ENCODE measurements at regions of chr12 and their contacts with region 1.

Region 1: GRCh38 chr12:110280779-110281548 is at the start of gene ATP2A2:
- DNase-seq: peak; percentile 80 to 98 (median 88)
- ATAC-seq: peak; percentile 87
- H3K4me3 ChIP-seq: peak within 1 kb of the TSS; percentile 82
- H3K4me3 Mint-ChIP-seq: peak within 1 kb of the TSS; percentile 97
- H3K27ac ChIP-seq: peak within 1 kb of the TSS; percentile 40 to 77
- H3K27ac Mint-ChIP-seq: peak within 1 kb of the TSS; percentile 91
- H3K4me1 ChIP-seq: peaks cover 23% of the 10 kb centered on the region
- H3K4me1 Mint-ChIP-seq: peaks cover 46% of the 10 kb centered on the region
- H3K27me3 ChIP-seq: no peaks in the 10 kb centered on the region
- H3K27me3 Mint-ChIP-seq: no peaks in the 10 kb centered on the region
- CTCF ChIP-seq: no peak
- total RNA-seq, gene ATP2A2: 113 to 117 TPM

Region 2: DNA sequence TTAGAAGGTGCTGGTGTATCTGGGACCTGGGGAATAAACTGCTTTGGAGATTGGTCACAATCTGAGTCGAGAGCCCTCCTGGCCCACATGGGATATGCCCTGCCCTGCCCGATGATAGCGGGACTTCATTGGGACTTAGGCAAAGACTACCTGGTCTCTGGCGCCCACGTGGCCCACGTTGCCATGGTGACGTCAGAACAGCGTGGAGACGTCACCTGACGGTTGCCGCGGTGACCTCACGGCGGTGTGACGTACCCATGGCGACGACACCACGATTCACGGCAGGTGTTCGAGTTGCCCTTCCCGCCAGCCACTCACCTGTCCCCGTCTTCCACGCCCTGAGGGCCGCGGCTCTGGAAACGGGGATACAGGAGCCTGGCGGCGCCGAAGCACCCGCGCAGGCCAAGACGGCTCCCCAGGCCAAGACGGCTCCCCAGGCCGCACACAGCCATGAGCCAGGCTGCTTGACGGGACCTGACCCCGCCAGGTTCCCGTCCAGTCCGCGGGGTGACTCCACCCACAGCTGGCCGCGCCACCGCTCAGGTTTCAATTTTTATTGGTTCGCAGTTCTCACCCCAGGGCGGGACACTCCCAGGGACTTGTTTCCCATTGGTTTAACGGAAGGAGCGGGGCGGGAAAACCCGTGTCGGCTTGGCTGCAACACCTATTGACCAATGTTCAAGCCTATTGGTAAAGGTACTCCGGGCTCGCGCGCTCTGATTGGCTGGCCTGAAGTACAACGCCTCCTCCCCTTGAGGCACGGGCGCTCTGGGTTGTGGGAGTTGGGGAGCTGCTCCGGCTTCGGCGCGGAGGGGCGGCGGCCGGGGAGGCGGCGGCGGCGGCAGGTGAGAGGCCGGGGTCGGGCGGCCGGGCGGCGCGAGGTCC is 707.7 kb before region 1 on chr12 and contains the starts of genes MMAB and MVK:
- CTCF ChIA-PET with region 1: no interaction called
- POLR2A ChIA-PET with region 1: no interaction called
- intact Hi-C with region 1: loop called in 1 of 2 experiments (anchors 10 kb)
- DNase-seq: peak; percentile 95 to 100 (median 98)
- ATAC-seq: peak; percentile 91
- H3K4me3 ChIP-seq: peak within 1 kb of the TSS; percentile 78
- H3K4me3 Mint-ChIP-seq: peak within 1 kb of the TSS; percentile 99
- H3K27ac ChIP-seq: peak within 1 kb of the TSS; percentile 83 to 96
- H3K27ac Mint-ChIP-seq: peak within 1 kb of the TSS; percentile 95
- H3K4me1 ChIP-seq: peaks cover 19% of the 10 kb centered on the region
- H3K4me1 Mint-ChIP-seq: peaks cover 29% of the 10 kb centered on the region
- H3K27me3 ChIP-seq: no peaks in the 10 kb centered on the region
- H3K27me3 Mint-ChIP-seq: no peaks in the 10 kb centered on the region
- CTCF ChIP-seq: no peak
- total RNA-seq, gene MMAB: 8.6 to 9.2 TPM
- total RNA-seq, gene MVK: 8.2 to 8.4 TPM

Region 3: GRCh38 chr12:110048242-110049027 is 232.5 kb before region 1 on chr12 and contains the start of gene C12orf76:
- CTCF ChIA-PET with region 1: no interaction called
- POLR2A ChIA-PET with region 1: no interaction called
- intact Hi-C with region 1: loop called in 1 of 2 experiments (anchors 5 kb)
- DNase-seq: peak; percentile 82 to 97 (median 90)
- ATAC-seq: peak; percentile 99
- H3K4me3 ChIP-seq: peak within 1 kb of the TSS; percentile 79
- H3K4me3 Mint-ChIP-seq: peak within 1 kb of the TSS; percentile 93
- H3K27ac ChIP-seq: peak within 1 kb of the TSS; percentile 76 to 87
- H3K27ac Mint-ChIP-seq: peak within 1 kb of the TSS; percentile 82
- H3K4me1 ChIP-seq: peaks cover 29% of the 10 kb centered on the region
- H3K4me1 Mint-ChIP-seq: peaks cover 29% of the 10 kb centered on the region
- H3K27me3 ChIP-seq: no peaks in the 10 kb centered on the region
- H3K27me3 Mint-ChIP-seq: no peaks in the 10 kb centered on the region
- CTCF ChIP-seq: no peak
- total RNA-seq, gene C12orf76: 9.8 to 12.6 TPM

Region 4: DNA sequence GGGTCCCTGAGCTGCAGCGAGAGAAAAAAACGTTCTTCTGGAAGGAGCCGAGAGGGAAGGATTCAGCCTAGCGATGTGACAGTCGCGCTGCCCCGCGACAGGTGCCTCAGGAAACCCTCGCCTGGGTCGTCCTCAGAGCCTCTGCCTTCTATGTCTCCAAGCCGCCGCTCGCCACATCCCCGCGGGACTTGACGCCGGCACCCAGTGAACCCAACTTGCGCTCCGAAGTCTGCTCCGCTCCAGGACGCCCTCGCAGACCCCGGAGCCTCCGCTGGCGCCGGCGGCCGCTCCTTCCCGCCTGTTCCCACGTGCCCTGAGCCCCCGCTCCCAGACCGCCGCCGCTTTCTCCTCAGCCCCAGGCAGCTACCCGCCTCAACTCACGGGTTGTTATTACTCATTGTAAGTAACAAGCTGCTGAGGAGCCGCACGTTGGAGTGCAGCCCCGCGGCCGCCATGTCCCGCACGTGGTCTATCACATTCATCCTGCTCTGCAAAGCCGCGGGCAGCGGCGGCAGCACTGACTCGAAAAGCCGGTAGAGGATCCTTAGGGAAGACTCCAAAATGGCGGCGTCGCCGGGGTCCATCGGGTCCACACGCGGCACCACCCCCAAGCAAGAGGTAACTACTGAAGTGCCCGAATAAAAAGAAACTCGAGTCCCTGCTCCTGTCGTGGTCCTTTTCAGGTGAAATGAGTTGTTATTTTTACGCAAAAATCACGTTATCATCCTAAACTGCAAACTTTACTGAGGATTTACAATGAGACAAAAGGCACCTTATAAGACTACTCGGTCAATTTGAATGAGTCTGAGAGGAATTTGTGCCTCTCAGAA is 122.4 kb after region 1 on chr12 and contains the start of gene ANAPC7:
- CTCF ChIA-PET with region 1: no interaction called
- POLR2A ChIA-PET with region 1: interaction called, 6 read pairs
- intact Hi-C with region 1: loop called in 1 of 2 experiments (anchors 5 kb)
- DNase-seq: peak; percentile 73 to 94 (median 84)
- ATAC-seq: peak; percentile 94
- H3K4me3 ChIP-seq: peak within 1 kb of the TSS; percentile 79
- H3K4me3 Mint-ChIP-seq: peak within 1 kb of the TSS; percentile 99
- H3K27ac ChIP-seq: peak within 1 kb of the TSS; percentile 86 to 91
- H3K27ac Mint-ChIP-seq: peak within 1 kb of the TSS; percentile 98
- H3K4me1 ChIP-seq: peaks cover 26% of the 10 kb centered on the region
- H3K4me1 Mint-ChIP-seq: peaks cover 41% of the 10 kb centered on the region
- H3K27me3 ChIP-seq: no peaks in the 10 kb centered on the region
- H3K27me3 Mint-ChIP-seq: no peaks in the 10 kb centered on the region
- CTCF ChIP-seq: no peak
- total RNA-seq, gene ANAPC7: 16.4 to 18.2 TPM

Region 5: GRCh38 chr12:110613771-110614684 is 333.1 kb after region 1 on chr12 and contains the start of gene TCTN1:
- CTCF ChIA-PET with region 1: no interaction called
- POLR2A ChIA-PET with region 1: no interaction called
- intact Hi-C with region 1: loop called in 1 of 2 experiments (anchors 10 kb)
- DNase-seq: peak; percentile 91 to 98 (median 96)
- ATAC-seq: peak; percentile 99
- H3K4me3 ChIP-seq: peak within 1 kb of the TSS; percentile 73
- H3K4me3 Mint-ChIP-seq: peak within 1 kb of the TSS; percentile 89
- H3K27ac ChIP-seq: peak within 1 kb of the TSS; percentile 61 to 68
- H3K27ac Mint-ChIP-seq: peak within 1 kb of the TSS; percentile 83
- H3K4me1 ChIP-seq: peaks cover 17% of the 10 kb centered on the region
- H3K4me1 Mint-ChIP-seq: peaks cover 4% of the 10 kb centered on the region
- H3K27me3 ChIP-seq: no peaks in the 10 kb centered on the region
- H3K27me3 Mint-ChIP-seq: no peaks in the 10 kb centered on the region
- CTCF ChIP-seq: no peak
- total RNA-seq, gene TCTN1: 5.0 to 5.5 TPM